Posterior vena cava (tissue), 2 donors: ENCODE measurements at regions of chr20 and their contacts with region 1.

Region 1: DNA sequence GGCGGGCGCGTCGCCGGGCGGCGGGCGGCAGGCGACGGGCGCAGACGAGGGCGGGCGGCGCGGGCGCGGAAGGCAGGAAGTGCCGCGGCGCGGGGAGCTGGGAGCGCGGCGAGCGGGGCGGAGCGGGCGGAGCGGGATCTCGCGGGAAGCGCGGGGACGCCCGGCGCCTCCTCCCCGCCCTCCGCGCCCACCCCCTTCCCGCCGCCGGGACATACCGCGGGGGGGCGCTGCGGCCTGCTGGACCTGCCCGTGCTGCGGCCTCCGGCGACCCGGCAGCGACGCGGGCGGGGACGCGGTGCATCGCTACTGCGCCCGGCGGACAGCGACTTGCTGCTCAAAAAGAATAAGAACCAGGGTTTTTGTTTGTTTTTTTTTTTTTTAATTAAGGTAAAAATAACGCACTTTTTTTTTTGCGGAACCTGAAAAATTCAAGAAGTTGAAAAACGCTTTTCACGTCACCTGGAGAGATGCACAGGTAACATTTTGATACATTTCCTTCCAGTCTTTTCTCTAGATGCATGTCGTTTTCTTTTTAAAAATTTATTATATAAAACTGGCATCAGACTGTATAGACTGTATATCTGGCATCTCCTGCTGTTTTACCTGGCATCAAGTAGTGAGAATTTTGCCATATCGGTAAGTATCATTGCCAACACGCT is at the start of gene CENPB:
- DNase-seq: peak; percentile 96
- total RNA-seq, gene CENPB: 97.4 to 119 TPM

Region 2: DNA sequence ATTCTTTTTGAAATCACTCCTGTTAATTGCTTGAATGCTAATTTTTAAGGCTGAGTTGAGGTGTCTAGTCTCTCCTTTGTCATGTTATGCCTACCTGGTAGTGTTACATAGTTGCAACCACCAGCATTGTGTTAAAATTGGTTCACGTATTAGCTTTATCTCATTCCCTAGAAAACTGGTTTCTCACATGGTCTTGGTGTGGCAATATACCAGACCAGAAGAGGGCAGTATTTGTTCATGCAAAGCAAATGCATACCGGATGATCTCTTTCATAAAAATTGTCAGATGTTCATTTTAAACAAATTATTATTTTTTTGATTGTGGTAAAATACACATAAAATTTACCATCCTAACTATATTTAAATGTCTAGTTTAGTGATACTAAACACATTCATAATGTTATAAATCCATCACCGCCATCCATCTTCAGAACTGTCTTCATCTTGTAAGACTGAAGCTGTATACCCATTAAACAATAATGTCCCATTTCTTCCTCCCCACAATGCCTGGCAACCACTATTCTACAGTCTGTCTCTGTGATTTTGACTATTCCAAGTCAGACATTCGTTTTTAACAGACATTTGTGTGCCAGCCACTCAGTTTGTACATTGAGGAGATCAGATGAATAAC is 223.1 kb before region 1 on chr20:
- intact Hi-C with region 1: no loop called
- DNase-seq: no peak

Region 3: GRCh38 chr20:3820048-3820900 is 33.5 kb after region 1 on chr20 and contains the start of gene AP5S1:
- intact Hi-C with region 1: loop called (anchors 1 to 5 kb)
- DNase-seq: peak; percentile 99
- total RNA-seq, gene AP5S1: 8.8 to 11.2 TPM